ENCODE measurements at regions of chr3 and their contacts with region 1.

Region 1: DNA sequence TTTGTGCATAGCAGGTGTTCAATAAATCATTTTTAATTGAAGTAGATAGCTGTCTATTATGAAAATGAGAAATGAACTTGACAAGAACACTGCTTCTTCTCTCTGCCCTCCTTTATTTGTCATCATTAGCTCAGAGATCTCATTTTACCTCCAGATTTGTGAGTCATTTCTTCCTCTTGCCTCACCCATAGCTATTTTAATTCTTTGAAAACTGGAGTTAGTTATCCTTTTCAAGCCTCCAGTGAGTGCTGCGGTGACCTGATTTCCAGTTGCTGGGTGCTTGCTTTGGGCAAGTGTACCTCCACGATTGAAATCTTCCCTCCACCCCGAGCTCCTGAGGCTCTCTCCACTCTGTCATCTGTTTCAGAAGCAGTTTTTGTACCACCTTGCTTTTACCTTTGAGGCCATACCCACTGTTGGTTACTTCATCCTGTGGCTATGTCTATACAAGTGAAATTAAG is 114.6 kb downstream of the NFKBIZ start:
- DNase-seq: no peak
- CTCF ChIP-seq: no peak

Region 2: GRCh38 chr3:101950510-101950909 is 13.4 kb before region 1 on chr3:
- CTCF ChIA-PET with region 1: interaction called, 23 read pairs
- POLR2A ChIA-PET with region 1: no interaction called
- DNase-seq: peak; percentile 24
- CTCF ChIP-seq: no peak

Measured in GM10248 (cell line).